Esophagus muscularis mucosa (tissue), 4 donors: ENCODE measurements at regions of chr17 and their contacts with region 1.

Region 1: DNA sequence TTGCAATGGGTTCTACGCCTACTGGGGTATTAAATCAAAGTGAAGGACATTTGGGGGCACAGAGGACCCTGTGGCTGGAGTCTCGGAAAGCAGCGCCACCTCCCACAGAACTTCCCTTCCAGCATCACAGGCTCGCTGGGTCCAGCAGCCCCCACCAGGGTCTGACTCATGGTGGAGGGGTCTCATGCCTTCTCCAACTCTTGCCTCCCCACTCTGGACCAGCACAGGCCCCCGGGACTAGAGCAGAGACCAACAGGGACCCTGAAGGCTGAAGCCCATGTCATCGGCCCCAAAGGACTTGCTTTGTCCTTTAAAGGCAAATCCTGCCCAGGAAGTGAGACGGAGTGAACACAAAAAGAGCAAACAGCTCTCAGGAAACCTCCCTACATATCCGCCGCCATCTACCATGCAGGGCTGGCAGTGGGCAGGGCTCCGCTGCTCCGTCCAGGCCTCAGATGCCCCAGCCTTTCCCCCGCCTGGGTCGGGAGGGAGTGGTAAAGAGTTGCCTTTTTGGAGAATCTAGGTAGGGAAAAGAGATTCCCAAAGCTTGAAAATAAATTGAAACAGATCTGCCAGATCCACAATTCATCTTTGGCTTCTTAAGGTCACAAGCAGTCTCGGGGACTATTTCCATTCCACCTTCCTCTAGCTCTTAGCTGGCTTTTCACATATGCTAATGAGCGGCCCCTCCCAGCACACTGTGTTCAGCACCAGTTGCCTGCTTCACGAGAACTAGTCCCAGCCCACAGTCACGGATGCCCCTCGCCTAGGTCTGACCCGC is 2.1 kb upstream of the GPRC5C start:
- DNase-seq: no peak
- H3K4me3 ChIP-seq: peak overlapping the region; percentile 61 to 72 (median 66)
- H3K27ac ChIP-seq: peak overlapping the region; percentile 88 to 90 (median 89)
- H3K4me1 ChIP-seq: peaks cover 34 to 49% (median 46%) of the 10 kb centered on the region in 4 donors
- H3K27me3 ChIP-seq: peaks cover 0 to 33% (median 11%) of the 10 kb centered on the region in 4 donors
- CTCF ChIP-seq: no peak
- EP300 ChIP-seq: no peak
- POLR2A ChIP-seq: no peak

Region 2: GRCh38 chr17:74379495-74380085 is 50.2 kb before region 1 on chr17:
- intact Hi-C with region 1: loop called (anchors 5 kb)
- DNase-seq: peak; percentile 97
- H3K4me3 ChIP-seq: peak overlapping the region; percentile 15 to 25 (median 22)
- H3K27ac ChIP-seq: peak overlapping the region in 3 of 4 donors; percentile 10 to 53 (median 48)
- H3K4me1 ChIP-seq: peaks cover 15 to 19% (median 16%) of the 10 kb centered on the region in 4 donors
- H3K27me3 ChIP-seq: no peaks in the 10 kb centered on the region
- CTCF ChIP-seq: peak; percentile 95 to 97 (median 95)
- EP300 ChIP-seq: no peak
- POLR2A ChIP-seq: no peak